Activated CD8-positive, alpha-beta T cell treated with anti-CD3 and anti-CD28 coated beads for 36 hours (primary cell): ENCODE measurements at regions of chr9 and their contacts with region 1.

Region 1: DNA sequence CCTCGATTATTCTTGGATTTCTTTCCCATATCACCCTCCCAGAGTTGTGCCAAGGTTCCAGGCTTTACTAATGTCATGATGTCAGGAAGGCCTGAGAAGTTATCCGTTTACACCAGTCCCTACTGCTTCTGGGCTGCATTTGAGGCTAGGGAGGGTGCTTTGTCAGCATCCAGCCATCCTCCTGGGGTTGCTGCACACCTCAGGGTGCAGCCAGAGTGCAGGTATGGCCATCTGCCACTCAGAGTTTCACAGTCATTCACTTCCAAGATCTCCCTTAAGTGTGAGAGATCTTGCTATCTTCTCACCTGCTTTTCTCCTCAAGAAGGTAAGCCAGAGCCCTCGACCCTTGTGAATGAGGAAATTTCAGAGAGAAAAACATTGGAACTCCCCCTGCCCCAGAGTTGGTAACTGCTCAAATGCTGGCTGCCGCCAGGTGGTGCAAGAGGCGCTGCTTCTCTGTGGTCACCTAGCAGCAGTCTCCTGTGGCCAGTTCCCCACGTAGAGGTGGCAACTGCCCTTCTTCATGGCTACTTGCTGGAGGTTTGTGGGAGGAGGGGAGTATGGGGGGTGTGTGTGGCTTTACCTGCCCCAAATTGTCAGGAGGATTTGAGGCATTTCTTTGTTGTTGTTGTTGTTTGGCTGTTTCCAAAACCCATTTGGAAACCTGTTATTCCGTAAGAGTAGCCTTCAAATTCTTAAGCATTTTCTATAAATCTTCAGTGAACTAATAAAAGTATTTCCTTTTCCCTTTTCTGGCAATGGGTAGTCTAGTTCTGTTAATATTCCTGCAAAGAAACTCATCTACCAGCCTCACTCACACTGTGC is 259.6 kb upstream of the DMRT1 start:
- DNase-seq: no peak
- ATAC-seq: no peak
- H3K4me3 Mint-ChIP-seq: no peak overlapping the region
- H3K27ac Mint-ChIP-seq: no peak overlapping the region
- H3K4me1 Mint-ChIP-seq: no peaks in the 10 kb centered on the region
- H3K27me3 Mint-ChIP-seq: no peaks in the 10 kb centered on the region
- CTCF ChIP-seq: no peak

Region 2: DNA sequence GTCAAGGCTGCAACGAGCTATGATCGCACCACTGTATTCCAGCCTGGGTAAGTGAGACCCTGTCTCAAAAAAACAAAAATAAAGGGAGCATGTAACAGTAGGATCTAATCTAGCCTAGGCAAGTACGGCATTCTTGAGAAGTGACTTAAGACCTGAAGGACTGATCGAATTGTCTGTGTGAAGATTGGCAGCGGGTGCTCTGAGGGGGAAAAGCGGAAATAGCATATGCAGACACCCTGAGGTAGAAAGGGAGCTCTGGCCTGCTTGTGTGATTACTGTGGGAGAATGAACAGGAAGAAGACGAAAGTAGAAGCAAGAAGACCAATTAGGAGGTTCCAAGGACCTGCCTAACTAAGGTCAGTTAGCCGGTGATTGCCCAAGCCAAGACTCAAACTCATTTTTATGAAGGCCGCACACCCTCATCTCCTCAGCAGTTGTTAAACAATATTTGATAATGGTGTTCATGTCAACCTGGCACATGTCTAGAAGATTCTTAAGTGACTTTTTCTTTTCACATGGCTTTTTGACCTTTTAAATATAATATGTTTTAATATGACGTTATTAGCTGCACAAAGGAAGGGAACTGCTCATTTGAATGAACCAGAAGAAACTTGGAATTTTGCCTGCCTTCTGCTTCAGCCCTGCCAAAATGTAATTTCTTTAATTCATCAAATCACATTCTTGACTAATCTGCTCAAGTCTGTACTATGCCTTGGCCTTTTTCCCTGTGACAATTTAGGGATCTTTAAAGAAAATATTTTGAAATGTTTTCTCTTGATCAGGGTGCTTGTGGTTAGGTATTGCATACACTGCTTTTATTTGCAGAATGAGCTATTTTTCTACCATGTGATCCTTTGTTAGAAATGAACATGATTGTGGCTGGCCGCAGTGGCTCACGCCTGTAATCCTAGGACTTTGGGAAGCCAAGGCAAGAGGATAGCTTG is 29.6 kb before region 1 on chr9:
- CTCF ChIA-PET with region 1: no interaction called
- POLR2A ChIA-PET with region 1: no interaction called
- intact Hi-C with region 1: loop called (anchors 1 kb)
- DNase-seq: no peak
- ATAC-seq: no peak
- H3K4me3 Mint-ChIP-seq: no peak overlapping the region
- H3K27ac Mint-ChIP-seq: no peak overlapping the region
- H3K4me1 Mint-ChIP-seq: no peaks in the 10 kb centered on the region
- H3K27me3 Mint-ChIP-seq: peaks cover 5% of the 10 kb centered on the region
- CTCF ChIP-seq: no peak

Region 3: GRCh38 chr9:642014-642413 is 60.1 kb after region 1 on chr9:
- CTCF ChIA-PET with region 1: no interaction called
- POLR2A ChIA-PET with region 1: no interaction called
- intact Hi-C with region 1: no loop called
- DNase-seq: no peak
- ATAC-seq: peak; percentile 49
- H3K4me3 Mint-ChIP-seq: no peak overlapping the region
- H3K27ac Mint-ChIP-seq: peak overlapping the region; percentile 49
- H3K4me1 Mint-ChIP-seq: peaks cover 17% of the 10 kb centered on the region
- H3K27me3 Mint-ChIP-seq: no peaks in the 10 kb centered on the region
- CTCF ChIP-seq: no peak